Caco-2 (cell line): ENCODE measurements at regions of chr3 and their contacts with region 1.

Region 1: DNA sequence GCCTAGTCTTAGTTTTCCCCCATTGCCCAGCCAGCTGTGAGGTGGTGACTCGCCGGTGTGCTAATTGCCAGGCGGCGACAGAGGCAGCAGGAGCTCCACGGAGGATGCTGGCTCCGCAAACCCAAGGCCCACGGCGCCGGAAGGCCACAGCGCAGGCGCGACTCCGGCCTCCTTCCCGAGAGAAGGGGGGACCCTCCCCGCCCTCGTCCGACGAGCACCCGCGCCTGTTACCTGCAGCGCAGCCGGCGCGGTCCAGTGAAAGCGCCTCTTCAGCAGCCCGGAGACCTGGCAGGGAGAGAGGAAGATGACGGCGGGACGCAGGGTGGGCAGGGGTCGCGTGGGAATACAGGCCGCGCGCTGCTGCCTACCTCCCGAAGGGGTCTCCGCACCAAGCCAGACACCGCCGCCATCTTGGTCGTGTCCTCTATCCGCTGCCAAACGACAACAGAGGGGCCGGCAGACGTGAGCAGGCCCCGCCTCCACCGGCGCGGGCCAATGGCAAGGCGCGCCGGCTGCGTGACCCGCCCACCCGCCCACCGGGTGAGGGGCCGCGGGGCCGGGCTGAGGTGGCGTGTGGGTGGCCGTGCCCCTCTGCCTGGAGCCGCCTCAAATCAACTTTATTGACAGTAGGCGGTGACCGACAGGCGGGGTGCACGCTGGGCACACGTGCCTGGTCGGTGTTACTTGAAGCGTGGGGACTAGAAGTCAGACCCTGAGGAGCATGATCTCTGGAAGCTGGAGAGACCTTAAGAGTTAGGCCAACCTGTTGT is at the start of gene PDHB:
- DNase-seq: peak; percentile 87 to 89
- H3K4me3 ChIP-seq: peak within 1 kb of the TSS; percentile 81
- H3K4me3 Mint-ChIP-seq: peak within 1 kb of the TSS; percentile 80
- H3K27ac Mint-ChIP-seq: peak within 1 kb of the TSS; percentile 82
- H3K4me1 ChIP-seq: peaks cover 21% of the 10 kb centered on the region
- H3K4me1 Mint-ChIP-seq: peaks cover 15% of the 10 kb centered on the region
- H3K27me3 ChIP-seq: no peaks in the 10 kb centered on the region
- H3K27me3 Mint-ChIP-seq: no peaks in the 10 kb centered on the region
- CTCF ChIP-seq: no peak
- total RNA-seq, gene PDHB: 81.8 and 89.8 TPM in 2 replicates

Region 2: GRCh38 chr3:58452176-58452575 is 18.6 kb after region 1 on chr3:
- CTCF ChIA-PET with region 1: no interaction called
- POLR2A ChIA-PET with region 1: no interaction called
- intact Hi-C with region 1: loop called (anchors 2 kb)
- DNase-seq: peak; percentile 29 to 36
- H3K4me3 ChIP-seq: no peak overlapping the region
- H3K4me3 Mint-ChIP-seq: no peak overlapping the region
- H3K27ac Mint-ChIP-seq: no peak overlapping the region
- H3K4me1 ChIP-seq: peaks cover 7% of the 10 kb centered on the region; the same call in 1 of the 2 replicates
- H3K4me1 Mint-ChIP-seq: no peaks in the 10 kb centered on the region
- H3K27me3 ChIP-seq: no peaks in the 10 kb centered on the region
- H3K27me3 Mint-ChIP-seq: no peaks in the 10 kb centered on the region
- CTCF ChIP-seq: no peak